Kidney (tissue), 22 donors: ENCODE measurements at regions of chr12 and their contacts with region 1.

Region 1: DNA sequence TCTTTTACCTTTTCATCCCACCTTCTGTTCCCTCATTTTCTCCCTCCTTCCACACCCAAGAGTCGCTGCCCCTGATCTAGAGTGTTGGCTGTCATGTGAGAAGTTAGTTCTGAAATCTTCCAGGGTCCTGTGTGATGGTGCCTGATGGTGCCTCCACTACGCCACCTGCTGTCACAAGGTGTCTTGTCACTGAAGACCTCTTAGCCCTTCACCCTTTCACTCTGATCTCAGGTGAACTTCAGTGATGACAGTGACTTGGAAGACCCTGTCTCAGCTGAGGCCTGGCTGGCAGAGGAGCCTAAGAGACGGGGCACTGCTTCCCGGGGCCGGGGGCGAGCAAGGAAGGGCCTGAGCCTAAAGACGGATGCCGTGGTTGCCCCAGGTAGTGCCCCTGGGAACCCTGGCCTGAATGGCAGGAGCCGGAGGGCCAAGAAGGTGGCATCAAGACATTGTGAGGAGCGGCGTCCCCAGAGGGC is 7.6 kb upstream of the PFDN5 start:
- DNase-seq: peak; percentile 42 to 82 (median 61)
- H3K4me3 ChIP-seq: no peak overlapping the region
- H3K27ac ChIP-seq: no peak overlapping the region
- H3K4me1 ChIP-seq: no peaks in the 10 kb centered on the region
- H3K27me3 ChIP-seq: no peaks in the 10 kb centered on the region
- CTCF ChIP-seq: peak; percentile 61

Region 2: DNA sequence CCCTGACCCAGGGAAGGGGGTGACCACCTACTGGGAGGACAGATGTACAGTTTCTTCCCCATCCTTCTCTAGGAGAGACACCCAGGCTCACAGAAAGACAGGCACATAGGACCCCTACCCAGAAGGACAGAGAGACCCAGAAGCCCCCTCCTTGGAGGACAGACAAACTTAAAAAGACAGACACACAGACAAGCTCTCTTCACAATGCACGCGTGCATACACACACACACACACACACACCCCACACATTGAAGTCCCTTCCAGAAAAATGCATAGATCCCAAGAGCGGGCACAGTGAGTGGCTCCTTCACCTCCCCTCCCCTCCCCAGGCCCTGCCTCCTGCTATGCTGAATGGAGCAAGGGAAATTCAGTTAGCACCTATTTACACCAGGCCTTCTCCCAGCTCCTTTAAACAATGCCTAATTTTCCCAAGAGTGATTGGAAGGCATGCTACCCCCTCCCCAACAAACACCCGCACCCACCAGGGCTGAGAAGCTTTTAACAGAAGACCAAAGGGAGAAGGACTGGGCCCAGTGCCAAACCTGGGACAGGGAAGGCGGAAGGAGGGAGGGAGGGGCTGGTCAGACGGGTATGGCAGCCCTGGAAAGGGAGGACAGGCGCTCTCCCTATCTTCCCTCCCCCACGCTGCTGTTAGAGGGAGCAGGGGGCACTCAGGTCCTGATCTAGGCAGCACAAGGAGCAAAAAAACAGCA is 380.8 kb before region 1 on chr12:
- intact Hi-C with region 1: no loop called
- DNase-seq: peak; percentile 66 to 89 (median 83)
- H3K4me3 ChIP-seq: no peak overlapping the region
- H3K27ac ChIP-seq: peak overlapping the region; percentile 84 to 92
- H3K4me1 ChIP-seq: peaks cover 0 to 27% (median 14%) of the 10 kb centered on the region in 3 donors
- H3K27me3 ChIP-seq: no peaks in the 10 kb centered on the region
- CTCF ChIP-seq: no peak

Region 3: GRCh38 chr12:53213348-53213747 is 74.4 kb before region 1 on chr12:
- intact Hi-C with region 1: loop called (anchors 10 kb)
- DNase-seq: peak; percentile 83 to 93 (median 87)
- H3K4me3 ChIP-seq: no peak overlapping the region
- H3K27ac ChIP-seq: no peak overlapping the region
- H3K4me1 ChIP-seq: peaks cover 0 to 43% (median 0%) of the 10 kb centered on the region in 3 donors
- H3K27me3 ChIP-seq: peaks cover 2% of the 10 kb centered on the region
- CTCF ChIP-seq: peak; percentile 96

Region 4: DNA sequence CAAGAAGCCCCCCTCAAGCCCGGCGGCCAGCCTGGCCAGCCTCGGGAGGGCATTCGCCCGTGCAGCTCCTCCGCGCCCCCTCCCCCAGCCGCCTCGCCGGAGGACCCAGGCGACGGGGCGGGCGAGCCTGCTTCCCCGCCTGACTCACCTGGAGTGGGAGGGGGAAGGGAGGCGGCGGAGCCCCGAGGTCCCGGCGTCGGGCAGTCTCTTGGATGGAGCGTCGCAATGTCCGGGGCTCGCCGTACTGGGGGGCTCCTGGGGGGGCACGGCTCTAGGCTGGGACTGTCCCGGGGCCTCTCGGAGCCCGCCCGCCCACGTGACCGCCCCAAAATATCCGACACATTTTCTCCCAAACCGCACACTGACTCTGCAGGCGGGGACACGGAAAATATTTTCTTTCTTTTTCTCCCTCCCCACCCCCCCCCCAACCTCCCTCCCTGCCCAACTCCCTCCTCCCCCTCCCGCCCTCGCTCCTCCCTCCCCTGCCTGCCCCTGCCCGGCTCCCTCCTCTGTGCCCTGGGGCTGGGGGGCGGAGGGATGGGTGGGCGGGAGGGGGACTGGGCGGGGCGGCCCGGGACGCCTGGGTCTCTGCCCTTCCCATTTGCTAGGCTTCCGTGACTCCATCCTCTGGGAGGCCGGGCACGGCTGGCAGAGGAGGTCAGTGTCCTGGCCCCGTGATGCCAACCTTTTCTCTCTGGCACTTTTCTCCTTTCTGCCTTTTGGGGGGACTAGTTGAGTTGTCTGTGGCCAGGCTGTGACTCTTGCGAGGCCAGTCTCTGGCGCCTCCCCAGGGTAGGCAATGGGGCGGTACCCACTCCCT is 55.7 kb before region 1 on chr12 and contains the start of gene RARG:
- intact Hi-C with region 1: no loop called
- DNase-seq: peak; percentile 62 to 94 (median 79)
- H3K4me3 ChIP-seq: peak within 1 kb of the TSS; percentile 59 to 73 (median 69)
- H3K27ac ChIP-seq: peak within 1 kb of the TSS; percentile 74 to 92
- H3K4me1 ChIP-seq: peaks cover 0 to 24% (median 7%) of the 10 kb centered on the region in 3 donors
- H3K27me3 ChIP-seq: no peaks in the 10 kb centered on the region
- CTCF ChIP-seq: no peak
- total RNA-seq, gene RARG: 34.1 TPM